ENCODE measurements at regions of chr6 and their contacts with region 1.

Region 1: GRCh38 chr6:105077596-105078385 is 102.0 kb downstream of the POPDC3 start:
- DNase-seq: peak; percentile 72
- H3K4me3 ChIP-seq: no peak overlapping the region
- H3K27ac ChIP-seq: no peak overlapping the region
- H3K4me1 ChIP-seq: no peaks in the 10 kb centered on the region
- H3K27me3 ChIP-seq: peaks cover 0 to 2% of the 10 kb centered on the region in 2 experiments
- CTCF ChIP-seq: peak in 1 of 2 donors; percentile 31
- POLR2A ChIP-seq: no peak

Region 2: GRCh38 chr6:104896914-104897313 is 180.9 kb before region 1 on chr6:
- CTCF ChIA-PET with region 1: interaction called, 29 read pairs
- POLR2A ChIA-PET with region 1: no interaction called
- dilution Hi-C with region 1: no loop called
- intact Hi-C with region 1: loop called (anchors 1 kb)
- DNase-seq: peak; percentile 9
- H3K4me3 ChIP-seq: no peak overlapping the region
- H3K27ac ChIP-seq: no peak overlapping the region
- H3K4me1 ChIP-seq: no peaks in the 10 kb centered on the region
- H3K27me3 ChIP-seq: no peaks in the 10 kb centered on the region
- CTCF ChIP-seq: no peak
- POLR2A ChIP-seq: no peak

Region 3: GRCh38 chr6:104995989-104996617 is 81.7 kb before region 1 on chr6:
- CTCF ChIA-PET with region 1: interaction called, 207 read pairs
- POLR2A ChIA-PET with region 1: no interaction called
- dilution Hi-C with region 1: no loop called
- intact Hi-C with region 1: loop called (anchors 1 kb)
- DNase-seq: peak; percentile 72
- H3K4me3 ChIP-seq: no peak overlapping the region
- H3K27ac ChIP-seq: no peak overlapping the region
- H3K4me1 ChIP-seq: no peaks in the 10 kb centered on the region
- H3K27me3 ChIP-seq: no peaks in the 10 kb centered on the region
- CTCF ChIP-seq: peak in 1 of 2 donors; percentile 14
- POLR2A ChIP-seq: no peak

Region 4: DNA sequence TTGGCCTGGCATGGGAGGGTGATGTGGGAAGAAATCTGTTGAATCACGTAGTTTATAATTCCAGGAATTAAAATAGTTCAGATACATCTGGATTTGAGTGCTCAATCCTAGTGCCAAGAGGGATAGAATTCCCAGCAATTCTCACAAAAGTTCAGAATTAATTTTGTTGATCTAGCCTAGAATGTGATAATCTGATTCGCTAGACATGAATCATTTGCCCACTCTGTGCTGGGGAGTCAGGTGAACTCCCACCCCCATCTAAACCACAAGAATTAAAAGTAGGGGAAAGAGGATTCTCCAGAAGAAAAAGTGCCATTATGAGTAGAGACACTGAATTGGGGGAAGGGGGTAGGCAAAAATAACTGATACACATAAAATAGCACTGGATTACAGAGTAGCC is 35.9 kb before region 1 on chr6:
- CTCF ChIA-PET with region 1: interaction called, 16 read pairs
- POLR2A ChIA-PET with region 1: no interaction called
- dilution Hi-C with region 1: no loop called
- intact Hi-C with region 1: no loop called
- DNase-seq: no peak
- H3K4me3 ChIP-seq: no peak overlapping the region
- H3K27ac ChIP-seq: no peak overlapping the region
- H3K4me1 ChIP-seq: peaks cover 6% of the 10 kb centered on the region
- H3K27me3 ChIP-seq: no peaks in the 10 kb centered on the region
- CTCF ChIP-seq: no peak
- POLR2A ChIP-seq: no peak

Region 5: DNA sequence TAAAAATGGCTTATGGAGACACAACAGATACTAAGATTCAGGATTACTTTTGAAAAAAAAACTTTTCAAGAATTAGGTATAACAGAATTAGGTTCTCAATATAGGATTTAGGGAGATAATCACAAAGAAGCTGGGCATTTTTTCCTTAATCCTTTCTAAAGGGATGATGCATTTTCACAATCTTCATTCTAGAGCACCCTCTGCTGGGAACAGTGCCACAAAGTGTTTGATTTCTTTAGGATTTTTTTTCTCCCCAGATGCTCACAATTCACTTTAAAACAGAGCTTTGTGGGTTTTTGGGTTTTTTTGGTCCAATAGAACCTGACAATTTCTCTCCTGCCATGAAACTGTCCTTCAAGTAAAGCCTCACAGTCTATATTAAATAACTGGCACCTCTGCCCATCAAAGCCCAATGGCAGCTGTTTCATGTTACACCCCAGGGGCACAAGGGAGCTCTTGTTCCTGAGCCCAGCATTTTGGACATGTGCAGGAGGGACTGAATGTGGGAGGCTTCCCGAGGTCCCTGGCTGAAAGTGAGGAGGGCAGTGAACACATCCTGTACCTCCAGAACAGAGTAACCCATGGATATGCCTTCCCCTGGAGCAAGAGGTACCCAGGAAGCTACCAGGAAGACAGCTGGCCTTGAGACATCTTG is 285.4 kb after region 1 on chr6:
- CTCF ChIA-PET with region 1: interaction called, 17 read pairs
- POLR2A ChIA-PET with region 1: no interaction called
- dilution Hi-C with region 1: no loop called
- intact Hi-C with region 1: no loop called
- DNase-seq: peak; percentile 30
- H3K4me3 ChIP-seq: no peak overlapping the region
- H3K27ac ChIP-seq: no peak overlapping the region
- H3K4me1 ChIP-seq: peaks cover 20% of the 10 kb centered on the region
- H3K27me3 ChIP-seq: no peaks in the 10 kb centered on the region
- CTCF ChIP-seq: peak; percentile 23 to 29
- POLR2A ChIP-seq: no peak

Region 6: DNA sequence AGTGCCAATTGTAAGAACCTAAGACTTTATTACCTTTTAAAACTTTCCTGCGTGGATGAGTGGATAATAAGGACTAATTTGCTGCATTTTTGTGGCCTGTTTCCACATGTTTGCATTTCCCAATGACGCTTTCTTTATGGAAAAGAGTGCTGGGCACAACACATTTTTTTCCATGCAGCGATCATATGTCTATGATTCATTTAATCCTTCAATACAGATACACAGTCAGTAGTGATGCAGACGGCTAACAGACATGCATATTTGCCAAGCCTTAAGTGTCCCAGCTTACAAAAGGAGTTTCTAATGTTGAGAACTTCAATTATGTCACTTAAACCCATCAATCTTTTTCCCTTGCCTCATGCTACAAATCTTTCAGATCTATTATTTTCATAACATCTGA is 564.9 kb after region 1 on chr6:
- CTCF ChIA-PET with region 1: no interaction called
- POLR2A ChIA-PET with region 1: no interaction called
- dilution Hi-C with region 1: no loop called
- intact Hi-C with region 1: no loop called
- DNase-seq: no peak
- H3K4me3 ChIP-seq: no peak overlapping the region
- H3K27ac ChIP-seq: no peak overlapping the region
- H3K4me1 ChIP-seq: no peaks in the 10 kb centered on the region
- H3K27me3 ChIP-seq: no peaks in the 10 kb centered on the region
- CTCF ChIP-seq: no peak
- POLR2A ChIP-seq: no peak